Caco-2 (cell line): ENCODE measurements at regions of chr3 and their contacts with region 1.

Region 1: GRCh38 chr3:88058591-88059368 is at the starts of genes CGGBP1 and ZNF654:
- DNase-seq: peak; percentile 98
- H3K4me3 ChIP-seq: peak within 1 kb of the TSS; percentile 99
- H3K4me3 Mint-ChIP-seq: peak within 1 kb of the TSS; percentile 86
- H3K27ac Mint-ChIP-seq: peak within 1 kb of the TSS; percentile 70
- H3K4me1 ChIP-seq: 0 out of 2 replicates have a peak, but pooled peaks cover 11% of the 10 kb centered on the region
- H3K4me1 Mint-ChIP-seq: peaks cover 6% of the 10 kb centered on the region
- H3K27me3 ChIP-seq: no peaks in the 10 kb centered on the region
- H3K27me3 Mint-ChIP-seq: no peaks in the 10 kb centered on the region
- CTCF ChIP-seq: no peak
- total RNA-seq, gene CGGBP1: 42.6 and 43.2 TPM in 2 replicates
- total RNA-seq, gene ZNF654: 6.8 and 8.9 TPM in 2 replicates

Region 2: GRCh38 chr3:88113311-88114162 is 54.8 kb after region 1 on chr3:
- CTCF ChIA-PET with region 1: interaction called, 6 read pairs
- POLR2A ChIA-PET with region 1: no interaction called
- intact Hi-C with region 1: loop called (anchors 1 kb)
- DNase-seq: peak; percentile 50 to 79
- H3K4me3 ChIP-seq: no peak overlapping the region
- H3K4me3 Mint-ChIP-seq: no peak overlapping the region
- H3K27ac Mint-ChIP-seq: no peak overlapping the region
- H3K4me1 ChIP-seq: no peaks in the 10 kb centered on the region
- H3K4me1 Mint-ChIP-seq: no peaks in the 10 kb centered on the region
- H3K27me3 ChIP-seq: no peaks in the 10 kb centered on the region
- H3K27me3 Mint-ChIP-seq: no peaks in the 10 kb centered on the region
- CTCF ChIP-seq: peak; percentile 49 to 70